ENCODE measurements at regions of chr1 and their contacts with region 1.

Region 1: GRCh38 chr1:110495926-110496600 is 22.9 kb downstream of the KCNA10 start:
- DNase-seq: peak; percentile 92
- ATAC-seq: peak; percentile 88
- H3K4me3 Mint-ChIP-seq: no peak overlapping the region
- H3K27ac Mint-ChIP-seq: no peak overlapping the region
- H3K4me1 Mint-ChIP-seq: no peaks in the 10 kb centered on the region
- H3K27me3 Mint-ChIP-seq: no peaks in the 10 kb centered on the region
- CTCF ChIP-seq: peak; percentile 89

Region 2: DNA sequence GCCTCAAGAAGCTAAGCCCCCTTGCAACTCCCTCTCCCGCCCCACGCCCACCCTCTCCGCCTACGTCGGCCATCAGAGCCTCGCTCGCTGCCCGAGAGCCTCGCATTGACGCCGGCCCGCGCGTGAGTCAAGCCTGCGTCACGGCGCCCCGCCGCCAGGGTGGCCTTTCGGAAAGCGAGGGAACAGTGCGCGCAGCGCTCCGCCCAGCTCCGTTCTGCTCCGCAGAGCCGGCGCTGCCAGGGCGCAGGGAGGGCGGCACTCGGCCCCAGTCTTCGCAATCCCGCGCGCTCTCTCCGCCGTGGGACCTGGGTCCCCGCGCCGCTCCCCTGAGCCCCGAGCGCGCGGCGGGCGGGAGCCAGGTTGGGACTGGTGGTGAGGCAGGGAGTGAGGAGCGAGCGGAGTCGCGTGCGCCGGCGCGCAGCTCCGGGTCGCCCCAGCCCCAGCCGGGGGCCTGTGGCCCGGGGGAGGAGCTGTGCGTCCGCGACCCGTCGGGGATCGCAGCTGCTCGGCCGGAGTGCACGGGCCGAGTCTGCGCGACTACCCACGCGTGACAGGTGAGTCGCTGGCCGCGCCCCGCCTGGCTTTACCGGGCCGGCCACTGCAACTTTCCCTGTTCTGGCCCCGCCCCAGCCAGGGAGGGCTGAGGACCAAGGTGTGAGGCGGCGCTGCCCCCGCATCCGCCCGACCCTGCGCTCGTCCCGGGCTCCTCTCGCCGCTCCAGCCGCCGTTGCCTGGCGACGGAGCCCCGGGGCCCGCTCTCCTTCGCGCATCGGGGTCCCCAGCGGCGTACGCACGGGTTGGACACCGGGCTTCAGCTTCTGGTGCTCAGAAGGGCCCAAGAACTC is 345.5 kb before region 1 on chr1 and contains the start of gene SLC6A17:
- CTCF ChIA-PET with region 1: no interaction called
- POLR2A ChIA-PET with region 1: no interaction called
- intact Hi-C with region 1: no loop called
- DNase-seq: peak; percentile 69
- ATAC-seq: peak; percentile 88
- H3K4me3 Mint-ChIP-seq: no peak within 1 kb of the TSS
- H3K27ac Mint-ChIP-seq: no peak within 1 kb of the TSS
- H3K4me1 Mint-ChIP-seq: peaks cover 3% of the 10 kb centered on the region
- H3K27me3 Mint-ChIP-seq: peaks cover 45% of the 10 kb centered on the region
- CTCF ChIP-seq: no peak
- total RNA-seq, gene SLC6A17: 0.05 to 0.18 TPM

Region 3: GRCh38 chr1:110196917-110197765 is 298.9 kb before region 1 on chr1:
- CTCF ChIA-PET with region 1: interaction called, 69 read pairs
- POLR2A ChIA-PET with region 1: no interaction called
- intact Hi-C with region 1: loop called (anchors 10 kb)
- DNase-seq: peak; percentile 61
- ATAC-seq: peak; percentile 100
- H3K4me3 Mint-ChIP-seq: no peak overlapping the region
- H3K27ac Mint-ChIP-seq: no peak overlapping the region
- H3K4me1 Mint-ChIP-seq: no peaks in the 10 kb centered on the region
- H3K27me3 Mint-ChIP-seq: no peaks in the 10 kb centered on the region
- CTCF ChIP-seq: peak; percentile 88

Region 4: DNA sequence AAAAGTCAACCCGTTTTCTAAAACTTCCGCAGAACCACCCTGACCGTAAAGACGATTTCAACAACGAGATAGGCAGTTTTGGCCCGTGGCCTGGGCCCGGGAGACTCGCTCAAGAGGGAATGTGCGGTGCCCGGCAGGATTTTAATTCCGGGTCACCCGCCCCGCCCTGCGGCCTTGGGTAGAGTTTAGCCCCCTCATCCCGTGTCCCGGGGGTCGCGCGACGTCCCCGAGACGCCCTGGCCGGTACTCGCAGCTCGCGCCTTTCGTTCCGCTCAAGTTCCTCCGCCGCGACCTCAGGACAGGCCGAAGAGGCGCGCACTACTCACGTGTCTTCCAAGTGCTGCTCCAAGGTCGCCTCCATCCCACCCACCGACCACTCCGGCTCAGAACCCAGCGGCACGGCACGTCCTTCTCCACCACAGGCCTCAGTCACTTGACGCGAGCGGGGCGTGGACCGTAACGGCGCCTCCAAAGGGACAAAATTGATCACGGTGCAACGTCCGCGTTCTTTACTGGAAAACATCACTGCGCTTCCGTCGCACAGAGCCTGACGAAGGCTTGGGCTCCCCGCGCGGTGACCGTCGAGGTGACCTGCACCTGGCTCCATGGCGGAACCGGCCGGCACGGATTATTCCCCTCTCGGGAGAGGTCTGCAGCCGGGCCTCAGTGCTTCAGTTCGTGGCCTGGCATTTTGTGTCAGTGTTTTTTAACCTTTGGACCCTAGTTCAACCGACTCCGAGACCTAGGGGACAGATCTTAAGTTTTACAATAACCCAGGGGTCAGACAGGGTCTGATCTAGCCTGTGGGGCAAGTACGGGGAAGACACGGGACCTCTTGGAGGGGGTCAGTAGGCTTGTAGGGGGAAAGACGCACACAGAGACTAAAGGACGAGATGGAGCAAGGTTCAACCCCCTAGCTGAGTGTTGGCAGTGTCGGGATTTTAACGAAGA is 88.5 kb before region 1 on chr1 and contains the start of gene LAMTOR5:
- CTCF ChIA-PET with region 1: interaction called, 101 read pairs
- POLR2A ChIA-PET with region 1: no interaction called
- intact Hi-C with region 1: no loop called
- DNase-seq: peak; percentile 96
- ATAC-seq: peak; percentile 94
- H3K4me3 Mint-ChIP-seq: peak within 1 kb of the TSS; percentile 98
- H3K27ac Mint-ChIP-seq: peak within 1 kb of the TSS; percentile 100
- H3K4me1 Mint-ChIP-seq: peaks cover 19% of the 10 kb centered on the region
- H3K27me3 Mint-ChIP-seq: no peaks in the 10 kb centered on the region
- CTCF ChIP-seq: no peak
- total RNA-seq, gene LAMTOR5: 154 to 160 TPM

Region 5: GRCh38 chr1:110455151-110455550 is 40.9 kb before region 1 on chr1:
- CTCF ChIA-PET with region 1: interaction called, 100 read pairs
- POLR2A ChIA-PET with region 1: no interaction called
- intact Hi-C with region 1: no loop called
- DNase-seq: no peak
- ATAC-seq: no peak
- H3K4me3 Mint-ChIP-seq: no peak overlapping the region
- H3K27ac Mint-ChIP-seq: no peak overlapping the region
- H3K4me1 Mint-ChIP-seq: no peaks in the 10 kb centered on the region
- H3K27me3 Mint-ChIP-seq: peaks cover 4% of the 10 kb centered on the region
- CTCF ChIP-seq: no peak

Region 6: GRCh38 chr1:110508038-110508940 is 12.2 kb after region 1 on chr1:
- CTCF ChIA-PET with region 1: interaction called, 42 read pairs
- POLR2A ChIA-PET with region 1: interaction called, 4 read pairs
- intact Hi-C with region 1: no loop called
- DNase-seq: no peak
- ATAC-seq: no peak
- H3K4me3 Mint-ChIP-seq: no peak overlapping the region
- H3K27ac Mint-ChIP-seq: no peak overlapping the region
- H3K4me1 Mint-ChIP-seq: no peaks in the 10 kb centered on the region
- H3K27me3 Mint-ChIP-seq: peaks cover under 1% of the 10 kb centered on the region
- CTCF ChIP-seq: no peak

Region 7: DNA sequence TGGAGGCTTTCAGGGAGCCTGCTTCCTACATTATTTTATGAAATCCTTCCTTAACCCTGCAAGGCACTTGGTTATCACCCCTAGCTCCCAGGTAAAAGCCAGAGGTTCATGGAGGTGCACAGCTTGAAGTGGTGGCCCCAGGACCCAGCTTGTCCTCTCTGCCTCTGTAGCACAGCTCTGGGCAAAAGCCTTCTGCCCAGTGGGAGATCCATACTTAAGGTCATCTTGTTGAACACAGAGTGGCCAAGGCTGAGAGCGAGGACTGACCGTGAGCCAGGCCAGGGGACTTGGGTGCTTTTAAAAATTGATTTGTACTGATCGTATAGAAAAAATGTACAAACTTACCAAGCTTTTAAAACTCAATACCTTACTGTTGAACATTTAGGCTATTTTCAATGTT is 76.7 kb after region 1 on chr1:
- CTCF ChIA-PET with region 1: interaction called, 17 read pairs
- POLR2A ChIA-PET with region 1: no interaction called
- intact Hi-C with region 1: no loop called
- DNase-seq: no peak
- ATAC-seq: no peak
- H3K4me3 Mint-ChIP-seq: no peak overlapping the region
- H3K27ac Mint-ChIP-seq: no peak overlapping the region
- H3K4me1 Mint-ChIP-seq: no peaks in the 10 kb centered on the region
- H3K27me3 Mint-ChIP-seq: peaks cover 11% of the 10 kb centered on the region
- CTCF ChIP-seq: no peak

Measured in activated CD8-positive, alpha-beta T cell treated with anti-CD3 and anti-CD28 coated beads for 36 hours (primary cell).